Activated B cell treated with CpG ODN at 0.5 μM for 24 hours (primary cell): ENCODE measurements at regions of chr1 and their contacts with region 1.

Region 1: DNA sequence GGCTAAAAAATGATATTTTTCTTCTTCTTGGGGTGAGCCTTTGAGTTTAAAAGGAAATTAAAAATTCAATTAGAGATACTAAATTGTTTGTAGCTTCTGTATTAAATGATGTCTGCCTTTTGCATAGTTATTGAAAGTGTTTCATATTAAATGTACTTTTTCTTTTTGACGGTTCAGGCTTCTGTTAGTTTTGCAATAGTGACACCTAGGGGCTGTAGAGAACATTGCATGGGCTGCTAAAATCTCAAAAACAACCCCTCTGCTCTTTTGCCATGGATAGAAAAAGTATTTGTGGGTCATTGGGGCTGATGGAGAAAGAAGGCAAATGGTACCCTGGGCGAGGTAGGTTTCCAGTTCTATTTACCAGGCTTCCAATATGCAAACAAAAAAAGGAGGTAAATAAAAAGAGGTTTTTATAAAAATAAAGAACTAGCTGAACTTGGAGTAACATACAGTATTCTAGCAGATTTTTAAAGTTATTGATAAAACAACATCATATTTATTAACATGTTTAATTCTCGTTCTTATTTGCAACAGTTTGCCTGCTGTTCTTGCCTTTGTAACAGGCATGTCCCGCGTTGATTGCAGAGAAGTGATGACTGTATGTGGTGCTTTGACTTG is 115.4 kb upstream of the HOOK1 start:
- DNase-seq: no peak
- ATAC-seq: peak; percentile 49
- H3K4me3 Mint-ChIP-seq: no peak overlapping the region
- H3K27ac Mint-ChIP-seq: peak overlapping the region; percentile 50
- H3K4me1 Mint-ChIP-seq: peaks cover 30% of the 10 kb centered on the region
- H3K27me3 Mint-ChIP-seq: no peaks in the 10 kb centered on the region
- CTCF ChIP-seq: peak; percentile 50

Region 2: GRCh38 chr1:58739856-58740466 is 959.4 kb before region 1 on chr1:
- CTCF ChIA-PET with region 1: interaction called, 97 read pairs
- POLR2A ChIA-PET with region 1: interaction called, 4 read pairs
- intact Hi-C with region 1: loop called (anchors 1 kb)
- DNase-seq: no peak
- ATAC-seq: peak; percentile 54
- H3K4me3 Mint-ChIP-seq: no peak overlapping the region
- H3K27ac Mint-ChIP-seq: no peak overlapping the region
- H3K4me1 Mint-ChIP-seq: no peaks in the 10 kb centered on the region
- H3K27me3 Mint-ChIP-seq: no peaks in the 10 kb centered on the region
- CTCF ChIP-seq: peak; percentile 87

Region 3: DNA sequence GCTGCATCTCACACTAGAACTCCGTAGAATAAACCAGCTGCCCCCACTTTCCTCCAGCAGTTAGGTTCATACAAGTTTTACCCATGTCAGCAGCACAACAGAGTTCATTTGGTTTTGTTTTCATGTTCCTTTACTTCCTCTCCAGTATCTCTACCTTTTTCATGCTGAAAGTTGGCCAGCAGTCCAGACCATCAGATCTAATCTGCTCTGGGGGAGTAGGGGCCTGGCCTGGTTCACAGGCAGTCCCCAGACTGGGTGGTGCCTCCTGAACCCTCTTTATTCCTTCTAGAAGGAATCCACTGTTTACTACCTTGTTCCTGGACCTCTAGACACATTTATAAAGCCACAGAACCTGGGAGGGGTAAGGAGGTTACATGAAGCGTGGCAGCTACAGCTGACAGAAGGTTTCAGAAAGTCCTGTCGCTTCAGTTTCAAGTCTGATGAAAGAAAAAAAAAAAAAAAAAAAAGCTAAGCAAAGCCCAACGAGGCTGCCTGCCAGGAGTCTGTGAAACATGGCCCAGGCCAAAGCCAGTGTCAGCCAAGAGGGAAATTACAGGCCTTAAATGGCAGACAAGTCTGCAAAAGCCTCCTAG is 730.9 kb before region 1 on chr1:
- CTCF ChIA-PET with region 1: no interaction called
- POLR2A ChIA-PET with region 1: interaction called, 5 read pairs
- intact Hi-C with region 1: loop called (anchors 2 kb)
- DNase-seq: peak; percentile 46
- ATAC-seq: peak; percentile 95
- H3K4me3 Mint-ChIP-seq: peak overlapping the region; percentile 77
- H3K27ac Mint-ChIP-seq: peak overlapping the region; percentile 99
- H3K4me1 Mint-ChIP-seq: peaks cover 72% of the 10 kb centered on the region
- H3K27me3 Mint-ChIP-seq: no peaks in the 10 kb centered on the region
- CTCF ChIP-seq: no peak

Region 4: GRCh38 chr1:59076612-59077011 is 622.7 kb before region 1 on chr1:
- CTCF ChIA-PET with region 1: interaction called, 5 read pairs
- POLR2A ChIA-PET with region 1: no interaction called
- intact Hi-C with region 1: loop called (anchors 10 kb)
- DNase-seq: no peak
- ATAC-seq: no peak
- H3K4me3 Mint-ChIP-seq: no peak overlapping the region
- H3K27ac Mint-ChIP-seq: no peak overlapping the region
- H3K4me1 Mint-ChIP-seq: peaks cover 31% of the 10 kb centered on the region
- H3K27me3 Mint-ChIP-seq: no peaks in the 10 kb centered on the region
- CTCF ChIP-seq: no peak

Region 5: DNA sequence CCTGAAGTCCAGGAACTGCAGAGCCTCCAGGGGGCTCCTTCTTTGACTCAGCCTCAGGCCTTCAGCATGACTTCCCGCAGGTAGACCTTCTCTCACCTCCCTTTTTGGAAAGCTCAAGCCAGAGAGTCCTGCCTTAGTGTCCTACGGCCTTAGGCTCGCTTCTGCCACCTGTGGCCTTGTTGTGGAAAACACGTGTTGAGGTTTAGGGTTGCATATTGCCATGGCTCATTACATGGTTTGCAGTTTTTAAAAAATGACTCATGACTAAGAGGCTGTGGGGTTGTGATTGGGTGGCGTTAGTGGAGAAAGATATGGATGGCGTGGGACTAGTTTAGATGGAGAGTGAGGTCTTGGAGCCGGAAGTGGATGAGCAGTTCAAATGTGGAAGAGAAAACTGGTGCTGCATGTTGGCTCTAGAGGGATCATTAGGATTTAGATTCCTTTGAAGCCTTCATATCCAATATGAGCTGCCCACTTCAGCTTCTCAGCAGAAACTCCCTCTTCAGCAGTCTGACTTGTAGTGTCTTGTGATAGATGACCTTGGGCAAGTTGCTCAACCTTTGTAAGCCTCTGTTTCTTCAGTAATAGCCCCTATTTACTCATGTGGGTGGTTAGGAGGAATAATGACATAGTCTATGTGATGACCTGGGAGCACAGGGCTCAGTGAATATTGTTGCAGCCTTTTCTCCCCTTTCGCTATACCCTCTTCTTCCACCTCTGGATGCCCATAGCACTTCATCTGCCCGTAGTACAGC is 409.0 kb before region 1 on chr1:
- CTCF ChIA-PET with region 1: interaction called, 10 read pairs
- POLR2A ChIA-PET with region 1: interaction called, 10 read pairs
- intact Hi-C with region 1: no loop called
- DNase-seq: no peak
- ATAC-seq: peak; percentile 67
- H3K4me3 Mint-ChIP-seq: no peak overlapping the region
- H3K27ac Mint-ChIP-seq: peak overlapping the region; percentile 15
- H3K4me1 Mint-ChIP-seq: peaks cover 37% of the 10 kb centered on the region
- H3K27me3 Mint-ChIP-seq: no peaks in the 10 kb centered on the region
- CTCF ChIP-seq: no peak

Region 6: DNA sequence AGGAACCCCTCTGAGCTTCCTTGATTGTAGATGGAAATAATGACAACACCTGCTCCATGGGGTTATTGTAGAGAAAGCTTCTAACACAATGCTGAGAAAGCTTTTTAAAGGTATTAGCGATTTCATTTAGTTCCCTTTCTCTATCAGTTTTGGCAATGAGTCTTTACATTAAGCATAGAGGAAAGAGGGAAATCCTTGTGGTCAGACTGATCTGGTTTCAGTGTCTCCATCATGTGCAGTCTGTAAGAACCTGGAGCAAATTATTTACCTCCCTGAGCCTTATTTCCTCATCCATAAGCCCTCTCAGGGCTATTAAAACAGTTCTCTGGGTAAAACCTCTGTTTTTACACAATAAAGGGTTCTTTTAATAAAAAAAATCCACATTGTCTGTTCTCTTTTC is 314.9 kb before region 1 on chr1:
- CTCF ChIA-PET with region 1: no interaction called
- POLR2A ChIA-PET with region 1: no interaction called
- intact Hi-C with region 1: no loop called
- DNase-seq: no peak
- ATAC-seq: no peak
- H3K4me3 Mint-ChIP-seq: no peak overlapping the region
- H3K27ac Mint-ChIP-seq: no peak overlapping the region
- H3K4me1 Mint-ChIP-seq: no peaks in the 10 kb centered on the region
- H3K27me3 Mint-ChIP-seq: no peaks in the 10 kb centered on the region
- CTCF ChIP-seq: no peak

Region 7: GRCh38 chr1:59759156-59759925 is 60.0 kb after region 1 on chr1:
- CTCF ChIA-PET with region 1: interaction called, 37 read pairs
- POLR2A ChIA-PET with region 1: no interaction called
- intact Hi-C with region 1: loop called (anchors 1 kb)
- DNase-seq: peak; percentile 50
- ATAC-seq: peak; percentile 93
- H3K4me3 Mint-ChIP-seq: peak overlapping the region; percentile 35
- H3K27ac Mint-ChIP-seq: no peak overlapping the region
- H3K4me1 Mint-ChIP-seq: peaks cover 4% of the 10 kb centered on the region
- H3K27me3 Mint-ChIP-seq: no peaks in the 10 kb centered on the region
- CTCF ChIP-seq: peak; percentile 96